Activated CD8-positive, alpha-beta T cell treated with anti-CD3 and anti-CD28 coated beads for 36 hours (primary cell): ENCODE measurements at regions of chr22 and their contacts with region 1.

Region 1: DNA sequence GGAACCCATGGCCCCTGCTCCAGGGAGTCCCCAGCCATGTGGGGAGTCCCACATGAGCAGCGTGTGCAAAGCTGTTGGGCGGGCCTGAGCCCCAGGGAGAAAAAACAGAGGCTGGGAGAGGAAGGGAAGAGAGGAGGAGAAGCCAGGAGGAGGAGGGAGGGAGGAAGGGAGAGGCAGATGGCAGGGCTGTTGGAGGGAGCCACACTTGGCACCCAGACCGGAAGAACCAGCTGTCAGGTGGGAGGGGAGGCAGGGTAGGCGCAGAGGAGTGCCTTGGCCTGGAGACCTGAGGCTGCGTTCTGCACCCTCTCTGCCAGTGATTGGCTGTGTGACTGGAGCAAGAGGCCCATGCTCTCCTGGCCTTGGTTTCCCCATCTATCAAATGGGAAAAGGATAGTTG is 6.7 kb downstream of the SYNGR1 start:
- DNase-seq: no peak
- ATAC-seq: no peak
- H3K4me3 Mint-ChIP-seq: no peak overlapping the region
- H3K27ac Mint-ChIP-seq: no peak overlapping the region
- H3K4me1 Mint-ChIP-seq: no peaks in the 10 kb centered on the region
- H3K27me3 Mint-ChIP-seq: no peaks in the 10 kb centered on the region
- CTCF ChIP-seq: no peak

Region 2: GRCh38 chr22:39343259-39344048 is 13.0 kb before region 1 on chr22:
- CTCF ChIA-PET with region 1: interaction called, 14 read pairs
- POLR2A ChIA-PET with region 1: no interaction called
- intact Hi-C with region 1: no loop called
- DNase-seq: peak; percentile 69
- ATAC-seq: peak; percentile 77
- H3K4me3 Mint-ChIP-seq: no peak overlapping the region
- H3K27ac Mint-ChIP-seq: no peak overlapping the region
- H3K4me1 Mint-ChIP-seq: peaks cover 4% of the 10 kb centered on the region
- H3K27me3 Mint-ChIP-seq: peaks cover 8% of the 10 kb centered on the region
- CTCF ChIP-seq: peak; percentile 72

Region 3: DNA sequence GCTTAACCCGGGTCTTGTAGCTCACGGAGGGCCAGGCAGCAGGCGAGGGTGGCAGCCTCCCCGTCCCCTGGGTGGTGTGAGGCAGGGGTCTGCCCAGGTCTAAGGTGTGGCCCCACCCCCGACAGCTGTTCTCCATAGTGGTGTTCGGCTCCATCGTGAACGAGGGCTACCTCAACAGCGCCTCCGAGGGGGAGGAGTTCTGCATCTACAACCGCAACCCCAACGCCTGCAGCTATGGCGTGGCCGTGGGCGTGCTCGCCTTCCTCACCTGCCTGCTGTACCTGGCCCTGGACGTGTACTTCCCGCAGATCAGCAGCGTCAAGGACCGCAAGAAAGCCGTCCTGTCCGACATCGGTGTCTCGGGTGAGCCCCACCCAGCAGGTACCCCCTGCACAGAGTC is 17.7 kb after region 1 on chr22:
- CTCF ChIA-PET with region 1: no interaction called
- POLR2A ChIA-PET with region 1: no interaction called
- intact Hi-C with region 1: no loop called
- DNase-seq: no peak
- ATAC-seq: no peak
- H3K4me3 Mint-ChIP-seq: no peak overlapping the region
- H3K27ac Mint-ChIP-seq: no peak overlapping the region
- H3K4me1 Mint-ChIP-seq: no peaks in the 10 kb centered on the region
- H3K27me3 Mint-ChIP-seq: no peaks in the 10 kb centered on the region
- CTCF ChIP-seq: no peak

Region 4: DNA sequence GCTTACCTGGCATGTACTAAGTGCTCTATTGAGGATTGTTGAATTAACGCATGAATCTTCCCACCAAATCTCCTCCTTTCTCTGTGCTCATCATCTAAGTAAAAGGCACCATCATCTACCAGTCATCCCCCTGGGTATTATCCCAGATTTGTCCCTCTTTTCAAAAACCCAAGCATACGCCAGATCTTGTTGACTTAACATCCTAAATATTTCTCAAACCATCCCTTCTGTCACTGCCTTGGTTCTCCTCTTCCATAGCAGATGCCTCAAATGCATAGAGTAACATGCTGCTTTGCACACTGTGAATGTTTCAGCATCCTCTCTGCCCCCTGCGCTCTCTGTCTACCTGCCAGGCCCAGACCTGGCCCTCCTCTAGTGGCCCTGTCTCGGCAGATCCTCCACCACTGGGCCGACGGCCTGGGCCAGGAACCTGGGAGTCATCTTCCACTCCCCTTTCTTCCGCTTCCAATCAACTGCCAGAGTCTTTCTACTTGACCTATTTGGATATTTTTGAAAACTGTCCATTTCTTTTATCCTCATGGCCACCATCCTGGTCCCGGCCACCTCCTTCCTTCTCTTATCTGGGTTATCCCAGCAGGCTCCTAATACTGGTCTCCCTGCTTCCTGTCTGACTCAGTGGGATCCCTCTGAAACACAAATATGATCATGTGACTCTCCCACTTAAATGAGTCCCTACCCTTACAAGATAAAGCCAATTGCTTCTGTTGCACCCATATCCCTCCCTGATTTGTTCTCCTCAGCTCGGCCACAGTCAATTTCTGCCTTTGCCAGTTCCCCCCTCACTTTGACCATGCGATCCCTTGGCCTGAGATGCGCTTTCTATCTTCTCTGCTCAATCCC is 39.7 kb after region 1 on chr22:
- CTCF ChIA-PET with region 1: no interaction called
- POLR2A ChIA-PET with region 1: no interaction called
- intact Hi-C with region 1: no loop called
- DNase-seq: no peak
- ATAC-seq: no peak
- H3K4me3 Mint-ChIP-seq: no peak overlapping the region
- H3K27ac Mint-ChIP-seq: no peak overlapping the region
- H3K4me1 Mint-ChIP-seq: peaks cover 5% of the 10 kb centered on the region
- H3K27me3 Mint-ChIP-seq: no peaks in the 10 kb centered on the region
- CTCF ChIP-seq: no peak